Esophagus squamous epithelium (tissue), 5 donors: ENCODE measurements at regions of chr9 and their contacts with region 1.

Region 1: GRCh38 chr9:115591584-115591984 is 473.6 kb upstream of the TNC start:
- DNase-seq: no peak
- H3K4me3 ChIP-seq: no peak overlapping the region
- H3K27ac ChIP-seq: peak overlapping the region; percentile 45 to 63 (median 56)
- H3K4me1 ChIP-seq: peaks cover 7 to 58% (median 12%) of the 10 kb centered on the region in 3 donors
- H3K27me3 ChIP-seq: peaks cover 0 to 3% (median 0%) of the 10 kb centered on the region in 4 donors
- CTCF ChIP-seq: peak; percentile 45 to 90 (median 84)
- POLR2A ChIP-seq: no peak

Region 2: GRCh38 chr9:115349526-115349925 is 242.1 kb before region 1 on chr9:
- intact Hi-C with region 1: no loop called
- DNase-seq: no peak
- H3K4me3 ChIP-seq: no peak overlapping the region
- H3K27ac ChIP-seq: no peak overlapping the region
- H3K4me1 ChIP-seq: peaks cover 0 to 9% (median 0%) of the 10 kb centered on the region in 3 donors
- H3K27me3 ChIP-seq: no peaks in the 10 kb centered on the region
- CTCF ChIP-seq: no peak
- POLR2A ChIP-seq: no peak

Region 3: GRCh38 chr9:115883457-115884329 is 292.1 kb after region 1 on chr9:
- intact Hi-C with region 1: loop called (anchors 10 kb)
- DNase-seq: no peak
- H3K4me3 ChIP-seq: no peak overlapping the region
- H3K27ac ChIP-seq: no peak overlapping the region
- H3K4me1 ChIP-seq: peaks cover 0 to 46% (median 13%) of the 10 kb centered on the region in 3 donors
- H3K27me3 ChIP-seq: no peaks in the 10 kb centered on the region
- CTCF ChIP-seq: peak in 5 of 6 experiments; percentile 40 to 80 (median 51)
- POLR2A ChIP-seq: no peak

Region 4: DNA sequence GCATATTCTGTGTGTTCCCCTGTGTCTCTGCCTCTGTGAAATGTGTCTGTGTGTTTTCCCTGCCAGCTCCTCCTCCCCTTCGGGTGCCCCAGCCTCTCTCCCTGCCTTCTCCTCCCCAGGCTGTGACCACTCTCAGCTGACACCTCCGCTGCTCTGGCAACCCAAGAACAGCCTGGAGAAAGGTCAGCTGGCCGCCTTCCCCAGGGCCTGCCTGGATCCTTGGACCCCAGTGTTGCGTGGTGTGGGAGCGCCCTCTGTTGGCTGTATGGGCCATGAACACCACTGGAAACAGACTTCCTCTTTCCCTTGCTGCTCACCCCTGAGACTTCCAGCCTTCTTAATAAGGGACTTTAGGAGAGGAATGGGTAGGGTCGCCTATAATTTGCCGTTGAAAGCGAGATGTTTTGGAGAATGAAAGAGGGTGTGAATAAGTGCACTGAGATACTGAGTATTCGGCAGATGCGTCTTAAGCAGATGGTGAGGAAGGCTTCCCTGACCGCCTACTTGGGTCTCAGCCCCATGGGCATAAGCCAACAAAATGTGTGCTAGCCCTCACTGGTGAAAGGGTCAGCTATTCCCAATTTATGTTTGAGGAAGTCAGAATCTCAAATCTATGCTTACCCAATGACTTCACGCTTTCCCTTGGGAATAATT is 980.6 kb after region 1 on chr9:
- intact Hi-C with region 1: loop called (anchors 10 kb)
- DNase-seq: no peak
- H3K4me3 ChIP-seq: no peak overlapping the region
- H3K27ac ChIP-seq: no peak overlapping the region
- H3K4me1 ChIP-seq: peaks cover 13 to 81% (median 15%) of the 10 kb centered on the region in 3 donors
- H3K27me3 ChIP-seq: no peaks in the 10 kb centered on the region
- CTCF ChIP-seq: peak; percentile 39 to 94 (median 80)
- POLR2A ChIP-seq: no peak

Region 5: DNA sequence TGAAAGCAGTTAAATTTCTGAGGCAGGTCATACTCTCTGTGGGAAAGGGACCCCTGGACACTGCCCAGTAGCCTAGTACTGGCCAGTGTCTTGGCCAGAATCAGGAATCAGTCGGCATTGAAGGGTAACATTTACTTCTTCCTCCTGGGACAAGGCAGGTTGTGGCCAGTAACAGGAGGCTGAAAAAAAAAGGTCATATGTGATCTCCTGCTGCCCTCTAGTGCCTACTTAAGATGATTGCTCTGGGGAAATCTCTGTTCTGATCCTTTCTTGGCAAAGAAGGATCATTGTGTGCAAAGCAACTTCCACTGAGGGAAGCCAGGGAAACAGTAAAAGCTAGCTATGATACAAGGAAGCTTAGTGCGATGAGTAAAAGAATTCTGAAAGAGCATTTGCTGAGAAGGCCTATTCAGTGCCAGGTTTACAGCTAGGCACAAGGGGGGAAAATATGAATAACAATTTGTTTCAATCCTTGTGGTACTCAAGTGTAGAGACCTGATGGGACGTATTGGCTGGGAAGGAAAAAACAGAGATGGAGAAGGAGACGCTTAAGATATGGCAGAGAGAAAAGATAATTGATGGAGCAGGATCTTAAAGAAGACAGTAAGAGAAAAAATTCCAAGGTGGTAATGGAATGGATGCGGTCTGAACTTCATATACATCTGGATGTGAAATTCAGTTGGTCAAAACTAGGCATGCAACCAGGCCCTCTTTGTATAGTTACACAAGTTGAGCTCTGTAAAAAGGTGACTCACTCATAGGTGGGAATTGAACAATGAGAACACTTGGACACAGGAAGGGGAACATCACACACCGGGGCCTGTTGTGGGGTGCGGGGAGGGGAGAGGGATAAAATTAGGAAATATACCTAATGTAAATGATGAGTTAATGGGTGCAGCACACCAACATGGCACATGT is 1069.7 kb after region 1 on chr9:
- intact Hi-C with region 1: loop called (anchors 10 kb)
- DNase-seq: no peak
- H3K4me3 ChIP-seq: no peak overlapping the region
- H3K27ac ChIP-seq: peak overlapping the region in 2 of 4 donors; percentile 7 to 26
- H3K4me1 ChIP-seq: peaks cover 0 to 25% (median 9%) of the 10 kb centered on the region in 3 donors
- H3K27me3 ChIP-seq: no peaks in the 10 kb centered on the region
- CTCF ChIP-seq: peak in 5 of 6 experiments; percentile 53 to 82 (median 70)
- POLR2A ChIP-seq: no peak